B cell (primary cell): ENCODE measurements at regions of chr3 and their contacts with region 1.

Region 1: GRCh38 chr3:49093853-49094767 is at the start of gene QRICH1:
- DNase-seq: peak; percentile 99
- ATAC-seq: peak; percentile 77
- H3K4me3 ChIP-seq: peak within 1 kb of the TSS; percentile 72 to 95 (median 88)
- H3K4me3 Mint-ChIP-seq: peak within 1 kb of the TSS; percentile 97
- H3K27ac ChIP-seq: peak within 1 kb of the TSS; percentile 87 to 94
- H3K27ac Mint-ChIP-seq: peak within 1 kb of the TSS; percentile 99
- H3K4me1 ChIP-seq: peaks cover 26 to 33% of the 10 kb centered on the region in 2 donors
- H3K4me1 Mint-ChIP-seq: peaks cover 37% of the 10 kb centered on the region
- H3K27me3 ChIP-seq: no peaks in the 10 kb centered on the region
- H3K27me3 Mint-ChIP-seq: no peaks in the 10 kb centered on the region
- CTCF ChIP-seq: peak; percentile 71
- total RNA-seq, gene QRICH1: 187 and 196 TPM in 2 replicates

Region 2: GRCh38 chr3:48847504-48848423 is 246.3 kb before region 1 on chr3 and contains the start of gene PRKAR2A:
- CTCF ChIA-PET with region 1: no interaction called
- POLR2A ChIA-PET with region 1: no interaction called
- intact Hi-C with region 1: loop called (anchors 5 kb)
- DNase-seq: peak; percentile 93
- ATAC-seq: peak; percentile 95
- H3K4me3 ChIP-seq: peak within 1 kb of the TSS; percentile 67 to 88 (median 80)
- H3K4me3 Mint-ChIP-seq: peak within 1 kb of the TSS; percentile 96
- H3K27ac ChIP-seq: peak within 1 kb of the TSS; percentile 68 to 89
- H3K27ac Mint-ChIP-seq: peak within 1 kb of the TSS; percentile 96
- H3K4me1 ChIP-seq: peaks cover 16 to 25% of the 10 kb centered on the region in 2 donors
- H3K4me1 Mint-ChIP-seq: peaks cover 28% of the 10 kb centered on the region
- H3K27me3 ChIP-seq: no peaks in the 10 kb centered on the region
- H3K27me3 Mint-ChIP-seq: no peaks in the 10 kb centered on the region
- CTCF ChIP-seq: no peak
- total RNA-seq, gene PRKAR2A: 25.0 and 27.5 TPM in 2 replicates

Region 3: GRCh38 chr3:49007068-49007770 is 86.9 kb before region 1 on chr3 and contains the start of gene WDR6:
- CTCF ChIA-PET with region 1: interaction called, 14 read pairs
- POLR2A ChIA-PET with region 1: interaction called, 17 read pairs
- intact Hi-C with region 1: loop called (anchors 1 kb)
- DNase-seq: peak; percentile 98
- ATAC-seq: peak; percentile 86
- H3K4me3 ChIP-seq: peak within 1 kb of the TSS; percentile 69 to 99 (median 94)
- H3K4me3 Mint-ChIP-seq: peak within 1 kb of the TSS; percentile 100
- H3K27ac ChIP-seq: peak within 1 kb of the TSS; percentile 95 to 96
- H3K27ac Mint-ChIP-seq: peak within 1 kb of the TSS; percentile 99
- H3K4me1 ChIP-seq: peaks cover 15 to 18% of the 10 kb centered on the region in 2 donors
- H3K4me1 Mint-ChIP-seq: peaks cover 27% of the 10 kb centered on the region
- H3K27me3 ChIP-seq: no peaks in the 10 kb centered on the region
- H3K27me3 Mint-ChIP-seq: no peaks in the 10 kb centered on the region
- CTCF ChIP-seq: peak; percentile 52
- total RNA-seq, gene WDR6: 270 and 287 TPM in 2 replicates

Region 4: GRCh38 chr3:49104483-49105291 is 10.6 kb after region 1 on chr3 and contains the start of gene QARS1:
- CTCF ChIA-PET with region 1: interaction called, 10 read pairs
- POLR2A ChIA-PET with region 1: interaction called, 28 read pairs
- intact Hi-C with region 1: loop called (anchors 1 kb)
- DNase-seq: peak; percentile 90
- ATAC-seq: peak; percentile 99
- H3K4me3 ChIP-seq: peak within 1 kb of the TSS; percentile 72 to 98 (median 93)
- H3K4me3 Mint-ChIP-seq: peak within 1 kb of the TSS; percentile 95
- H3K27ac ChIP-seq: peak within 1 kb of the TSS; percentile 61 to 81
- H3K27ac Mint-ChIP-seq: peak within 1 kb of the TSS; percentile 94
- H3K4me1 ChIP-seq: peaks cover 11 to 18% of the 10 kb centered on the region in 2 donors
- H3K4me1 Mint-ChIP-seq: peaks cover 27% of the 10 kb centered on the region
- H3K27me3 ChIP-seq: no peaks in the 10 kb centered on the region
- H3K27me3 Mint-ChIP-seq: no peaks in the 10 kb centered on the region
- CTCF ChIP-seq: no peak
- total RNA-seq, gene QARS1: 252 and 282 TPM in 2 replicates

Region 5: GRCh38 chr3:49171119-49171774 is 77.1 kb after region 1 on chr3 and contains the start of gene KLHDC8B:
- CTCF ChIA-PET with region 1: no interaction called
- POLR2A ChIA-PET with region 1: no interaction called
- intact Hi-C with region 1: no loop called
- DNase-seq: peak; percentile 81
- ATAC-seq: peak; percentile 79
- H3K4me3 ChIP-seq: peak within 1 kb of the TSS; percentile 59 to 76 (median 71)
- H3K4me3 Mint-ChIP-seq: peak within 1 kb of the TSS; percentile 90
- H3K27ac ChIP-seq: peak within 1 kb of the TSS in 1 of 2 donors; percentile 29
- H3K27ac Mint-ChIP-seq: peak within 1 kb of the TSS; percentile 70
- H3K4me1 ChIP-seq: peaks cover 19 to 25% of the 10 kb centered on the region in 2 donors
- H3K4me1 Mint-ChIP-seq: peaks cover 15% of the 10 kb centered on the region
- H3K27me3 ChIP-seq: peaks cover 0 to 7% (median 1%) of the 10 kb centered on the region in 4 experiments
- H3K27me3 Mint-ChIP-seq: peaks cover 7% of the 10 kb centered on the region
- CTCF ChIP-seq: peak; percentile 95
- total RNA-seq, gene KLHDC8B: 1.9 and 3.6 TPM in 2 replicates

Region 6: GRCh38 chr3:49339945-49340800 is 246.1 kb after region 1 on chr3 and contains the start of gene USP4:
- CTCF ChIA-PET with region 1: interaction called, 4 read pairs
- POLR2A ChIA-PET with region 1: interaction called, 15 read pairs
- intact Hi-C with region 1: loop called (anchors 1 kb)
- DNase-seq: peak; percentile 96
- ATAC-seq: peak; percentile 86
- H3K4me3 ChIP-seq: peak within 1 kb of the TSS; percentile 82 to 96 (median 90)
- H3K4me3 Mint-ChIP-seq: peak within 1 kb of the TSS; percentile 83
- H3K27ac ChIP-seq: peak within 1 kb of the TSS; percentile 96 to 99
- H3K27ac Mint-ChIP-seq: peak within 1 kb of the TSS; percentile 97
- H3K4me1 ChIP-seq: peaks cover 60 to 70% of the 10 kb centered on the region in 2 donors
- H3K4me1 Mint-ChIP-seq: peaks cover 53% of the 10 kb centered on the region
- H3K27me3 ChIP-seq: no peaks in the 10 kb centered on the region
- H3K27me3 Mint-ChIP-seq: no peaks in the 10 kb centered on the region
- CTCF ChIP-seq: no peak
- total RNA-seq, gene USP4: 113 and 116 TPM in 2 replicates

Region 7: DNA sequence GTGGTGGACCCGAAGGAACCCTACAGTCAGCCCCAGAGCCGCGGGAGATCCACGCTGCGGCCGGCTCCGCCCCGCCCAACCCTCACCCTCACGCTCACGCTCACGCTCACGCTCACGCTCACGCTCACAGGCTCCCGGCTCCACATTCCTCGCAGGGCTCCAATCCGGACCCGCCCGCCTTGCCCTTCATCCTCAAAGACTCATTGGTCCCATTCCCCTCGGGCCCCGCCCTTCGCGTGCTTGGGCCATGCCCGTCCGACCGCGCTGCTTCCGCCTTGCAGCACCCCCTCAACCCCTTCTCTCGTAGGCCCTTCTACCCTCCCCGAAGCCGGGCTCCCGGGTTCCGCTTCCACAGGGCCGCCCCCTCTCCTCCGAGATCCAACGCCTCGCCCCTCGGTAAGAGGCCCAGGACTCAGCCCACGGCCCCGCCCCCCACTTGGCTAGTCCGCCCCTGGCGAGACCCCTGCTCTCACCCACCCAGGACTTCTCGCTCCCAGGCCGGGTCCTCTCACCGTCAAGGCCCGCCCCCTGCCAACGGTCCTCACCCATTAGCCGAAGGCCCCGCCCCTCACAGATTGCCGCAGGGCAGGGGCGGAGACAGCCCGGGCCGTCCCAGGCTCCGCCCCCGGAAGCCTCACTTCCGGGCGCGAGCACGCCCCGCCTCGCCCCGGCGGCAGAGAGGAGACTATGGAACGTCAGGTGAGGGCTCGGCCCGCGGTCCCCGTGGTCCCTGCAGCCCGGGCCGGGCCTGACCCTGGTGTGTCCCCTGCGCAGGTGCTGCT is 579.8 kb after region 1 on chr3 and contains the start of gene APEH:
- CTCF ChIA-PET with region 1: no interaction called
- POLR2A ChIA-PET with region 1: no interaction called
- intact Hi-C with region 1: loop called (anchors 1 kb)
- DNase-seq: peak; percentile 98
- ATAC-seq: peak; percentile 88
- H3K4me3 ChIP-seq: peak within 1 kb of the TSS; percentile 51 to 84 (median 73)
- H3K4me3 Mint-ChIP-seq: peak within 1 kb of the TSS; percentile 99
- H3K27ac ChIP-seq: peak within 1 kb of the TSS; percentile 86 to 94
- H3K27ac Mint-ChIP-seq: peak within 1 kb of the TSS; percentile 98
- H3K4me1 ChIP-seq: peaks cover 13 to 18% of the 10 kb centered on the region in 2 donors
- H3K4me1 Mint-ChIP-seq: peaks cover 30% of the 10 kb centered on the region
- H3K27me3 ChIP-seq: no peaks in the 10 kb centered on the region
- H3K27me3 Mint-ChIP-seq: no peaks in the 10 kb centered on the region
- CTCF ChIP-seq: no peak
- total RNA-seq, gene APEH: 87.5 and 96.2 TPM in 2 replicates